ENCODE measurements at regions of chr6 and their contacts with region 1.

Region 1: GRCh38 chr6:71349395-71349794 is 60.8 kb downstream of the OGFRL1 start:
- DNase-seq: no peak
- H3K4me3 ChIP-seq: no peak overlapping the region
- H3K27ac ChIP-seq: peak overlapping the region; percentile 74
- H3K4me1 ChIP-seq: peaks cover 26% of the 10 kb centered on the region
- H3K27me3 ChIP-seq: no peaks in the 10 kb centered on the region
- CTCF ChIP-seq: peak; percentile 84

Region 2: DNA sequence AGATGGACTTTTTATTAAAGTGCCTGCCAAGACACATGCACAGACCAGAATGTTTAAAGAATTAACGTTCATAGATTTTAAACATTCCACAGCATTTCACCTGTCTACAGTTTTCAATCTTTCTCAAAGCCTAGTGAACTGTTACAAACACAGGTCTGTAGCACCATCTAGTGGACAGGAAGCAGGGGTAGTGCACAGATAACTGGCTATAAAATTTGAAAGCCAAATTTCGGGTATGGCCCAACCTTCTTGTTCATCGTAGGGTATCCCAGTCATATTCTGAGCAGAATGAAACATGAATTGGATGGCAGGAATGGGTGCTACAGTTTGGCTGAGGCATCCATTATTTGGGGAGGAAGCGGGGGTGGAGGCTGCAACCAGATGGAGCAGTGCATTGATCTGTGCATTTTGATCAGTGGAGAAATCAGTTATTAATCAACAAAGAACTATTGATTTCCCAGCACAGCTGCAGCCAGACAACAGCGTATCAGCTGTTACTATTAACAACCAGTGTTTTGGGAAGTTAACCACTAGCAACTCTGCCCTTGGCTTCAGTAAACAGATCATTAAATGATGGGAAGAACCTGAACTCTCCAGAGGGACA is 336.4 kb before region 1 on chr6:
- intact Hi-C with region 1: loop called (anchors 10 kb)
- DNase-seq: no peak
- H3K4me3 ChIP-seq: no peak overlapping the region
- H3K27ac ChIP-seq: no peak overlapping the region
- H3K4me1 ChIP-seq: no peaks in the 10 kb centered on the region
- H3K27me3 ChIP-seq: peaks cover 4% of the 10 kb centered on the region
- CTCF ChIP-seq: peak; percentile 81

Region 3: GRCh38 chr6:71190809-71191208 is 158.6 kb before region 1 on chr6:
- intact Hi-C with region 1: loop called (anchors 5 kb)
- DNase-seq: no peak
- H3K4me3 ChIP-seq: no peak overlapping the region
- H3K27ac ChIP-seq: no peak overlapping the region
- H3K4me1 ChIP-seq: no peaks in the 10 kb centered on the region
- H3K27me3 ChIP-seq: no peaks in the 10 kb centered on the region
- CTCF ChIP-seq: peak; percentile 50

Region 4: GRCh38 chr6:71294121-71294523 is 55.3 kb before region 1 on chr6:
- intact Hi-C with region 1: loop called (anchors 10 kb)
- DNase-seq: no peak
- H3K4me3 ChIP-seq: no peak overlapping the region
- H3K27ac ChIP-seq: no peak overlapping the region
- H3K4me1 ChIP-seq: peaks cover 43% of the 10 kb centered on the region
- H3K27me3 ChIP-seq: no peaks in the 10 kb centered on the region
- CTCF ChIP-seq: no peak

Region 5: GRCh38 chr6:71433441-71433840 is 84.0 kb after region 1 on chr6:
- intact Hi-C with region 1: no loop called
- DNase-seq: no peak
- H3K4me3 ChIP-seq: no peak overlapping the region
- H3K27ac ChIP-seq: no peak overlapping the region
- H3K4me1 ChIP-seq: no peaks in the 10 kb centered on the region
- H3K27me3 ChIP-seq: peaks cover 3% of the 10 kb centered on the region
- CTCF ChIP-seq: no peak

Region 6: DNA sequence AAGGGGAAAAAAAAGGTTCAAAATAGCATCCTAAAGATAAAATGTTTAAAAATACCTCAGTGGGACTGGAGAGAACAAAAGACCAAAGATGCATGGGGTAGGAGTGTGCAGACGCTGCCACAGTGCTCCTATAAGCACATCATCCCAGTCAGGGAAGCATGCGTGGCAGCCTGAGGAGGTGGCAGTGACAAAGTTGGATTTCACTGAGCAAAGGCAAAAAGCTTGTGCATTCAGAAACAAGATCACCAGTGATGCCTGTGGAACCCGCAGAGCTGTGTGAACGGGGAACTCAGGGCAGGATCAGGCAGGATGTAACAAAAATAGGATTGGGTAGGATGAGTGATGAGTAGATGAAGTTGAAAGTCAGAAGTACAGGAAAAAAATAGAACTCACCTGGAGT is 653.0 kb after region 1 on chr6:
- intact Hi-C with region 1: no loop called
- DNase-seq: no peak
- H3K4me3 ChIP-seq: no peak overlapping the region
- H3K27ac ChIP-seq: no peak overlapping the region
- H3K4me1 ChIP-seq: no peaks in the 10 kb centered on the region
- H3K27me3 ChIP-seq: no peaks in the 10 kb centered on the region
- CTCF ChIP-seq: no peak

Measured in left ventricle myocardium inferior (tissue), 1 donor.